ENCODE measurements at regions of chr2 and their contacts with region 1.

Region 1: DNA sequence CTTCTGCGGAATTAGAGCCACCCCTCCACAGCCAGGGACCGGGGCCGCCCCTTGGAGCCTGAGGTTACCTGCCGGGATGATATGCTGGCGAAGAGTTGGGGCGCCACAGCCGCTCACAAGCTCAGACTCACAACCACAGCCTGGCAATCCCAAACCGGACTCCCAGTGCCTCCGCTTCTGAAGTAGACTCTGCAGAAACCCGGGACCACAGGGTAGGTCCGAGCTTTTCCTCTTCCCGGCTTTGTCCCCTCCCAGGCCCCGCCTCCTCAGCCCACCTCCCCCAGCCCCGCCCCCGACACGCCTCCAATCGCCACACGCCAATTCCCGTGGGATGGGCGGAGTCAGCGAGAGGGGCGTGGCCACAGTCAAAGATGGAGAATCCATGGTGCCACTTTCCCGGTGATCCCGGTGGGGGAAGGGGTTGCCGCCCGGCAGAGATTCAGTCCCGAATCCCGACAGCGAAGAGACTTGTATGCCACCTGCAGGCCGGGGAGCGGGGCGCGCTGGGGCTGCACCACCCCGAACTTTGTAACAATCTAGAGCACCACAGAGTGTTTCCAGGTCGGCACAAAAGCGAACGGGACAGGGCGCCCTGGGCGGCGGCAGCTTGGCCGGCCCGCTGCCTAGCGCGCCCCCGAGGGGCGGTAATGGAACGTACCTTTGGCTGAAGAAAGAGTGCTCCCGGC is at the start of gene IDH1:
- DNase-seq: peak; percentile 99
- ATAC-seq: peak; percentile 79
- H3K4me3 Mint-ChIP-seq: peak within 1 kb of the TSS; percentile 100
- H3K27ac Mint-ChIP-seq: peak within 1 kb of the TSS; percentile 88
- H3K4me1 Mint-ChIP-seq: peaks cover 48% of the 10 kb centered on the region
- H3K27me3 Mint-ChIP-seq: no peaks in the 10 kb centered on the region
- CTCF ChIP-seq: no peak
- total RNA-seq, gene IDH1: 36.9 and 46.6 TPM in 2 replicates

Region 2: GRCh38 chr2:206693399-206694137 is 1561.4 kb before region 1 on chr2:
- CTCF ChIA-PET with region 1: no interaction called
- POLR2A ChIA-PET with region 1: no interaction called
- intact Hi-C with region 1: loop called (anchors 1 kb)
- DNase-seq: no peak
- ATAC-seq: peak; percentile 31
- H3K4me3 Mint-ChIP-seq: no peak overlapping the region
- H3K27ac Mint-ChIP-seq: no peak overlapping the region
- H3K4me1 Mint-ChIP-seq: no peaks in the 10 kb centered on the region
- H3K27me3 Mint-ChIP-seq: peaks cover 12% of the 10 kb centered on the region
- CTCF ChIP-seq: no peak

Region 3: GRCh38 chr2:207746131-207746530 is 508.9 kb before region 1 on chr2:
- CTCF ChIA-PET with region 1: interaction called, 7 read pairs
- POLR2A ChIA-PET with region 1: no interaction called
- intact Hi-C with region 1: loop called (anchors 2 kb)
- DNase-seq: peak; percentile 22
- ATAC-seq: peak; percentile 95
- H3K4me3 Mint-ChIP-seq: no peak overlapping the region
- H3K27ac Mint-ChIP-seq: no peak overlapping the region
- H3K4me1 Mint-ChIP-seq: no peaks in the 10 kb centered on the region
- H3K27me3 Mint-ChIP-seq: no peaks in the 10 kb centered on the region
- CTCF ChIP-seq: peak; percentile 46

Region 4: DNA sequence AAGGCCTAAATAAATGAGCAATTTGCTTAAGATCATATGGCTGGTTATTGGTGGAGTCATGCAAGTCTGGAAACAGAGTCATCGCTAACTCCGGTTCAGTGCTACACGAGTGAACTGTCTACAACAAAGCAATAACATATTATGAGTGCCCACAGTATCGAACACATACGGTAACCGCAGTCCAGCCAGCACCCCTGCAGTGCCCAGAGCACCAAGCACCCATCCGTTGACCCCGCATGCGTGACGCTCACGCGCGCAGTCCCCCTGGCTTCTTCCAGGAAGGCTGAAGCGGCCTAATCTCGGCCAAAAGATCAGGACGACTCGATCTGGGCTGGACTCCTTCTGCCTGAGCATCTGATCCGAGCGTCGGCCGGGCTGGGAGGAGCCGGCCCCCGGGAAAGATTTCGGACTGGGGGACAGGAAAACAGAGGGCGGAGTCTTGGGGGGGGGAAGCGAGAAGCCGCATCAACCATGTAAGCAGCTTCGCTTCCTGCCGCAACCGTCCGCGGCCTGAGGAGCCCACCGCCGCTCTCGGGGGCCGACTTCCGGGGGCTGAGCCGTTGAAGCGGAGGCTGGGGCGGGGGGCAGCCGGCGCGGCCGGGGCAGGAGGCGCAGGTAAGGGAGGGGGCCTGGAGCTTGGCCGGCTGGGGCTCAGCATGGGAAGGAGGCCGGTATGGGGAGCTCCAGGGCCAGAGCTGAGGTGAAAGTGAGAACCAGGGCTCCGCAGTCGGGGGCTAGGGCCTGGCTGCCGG is 11.0 kb after region 1 on chr2 and contains the start of gene PIKFYVE:
- CTCF ChIA-PET with region 1: interaction called, 86 read pairs
- POLR2A ChIA-PET with region 1: interaction called, 74 read pairs
- intact Hi-C with region 1: loop called (anchors 1 kb)
- DNase-seq: peak; percentile 85
- ATAC-seq: peak; percentile 87
- H3K4me3 Mint-ChIP-seq: peak within 1 kb of the TSS; percentile 95
- H3K27ac Mint-ChIP-seq: peak within 1 kb of the TSS; percentile 95
- H3K4me1 Mint-ChIP-seq: peaks cover 56% of the 10 kb centered on the region
- H3K27me3 Mint-ChIP-seq: no peaks in the 10 kb centered on the region
- CTCF ChIP-seq: no peak
- total RNA-seq, gene PIKFYVE: 92.2 and 106 TPM in 2 replicates

Region 5: GRCh38 chr2:208320686-208321085 is 65.7 kb after region 1 on chr2:
- CTCF ChIA-PET with region 1: interaction called, 20 read pairs
- POLR2A ChIA-PET with region 1: interaction called, 11 read pairs
- intact Hi-C with region 1: loop called (anchors 1 kb)
- DNase-seq: no peak
- ATAC-seq: peak; percentile 82
- H3K4me3 Mint-ChIP-seq: peak overlapping the region; percentile 62
- H3K27ac Mint-ChIP-seq: peak overlapping the region; percentile 74
- H3K4me1 Mint-ChIP-seq: peaks cover 70% of the 10 kb centered on the region
- H3K27me3 Mint-ChIP-seq: no peaks in the 10 kb centered on the region
- CTCF ChIP-seq: no peak

Region 6: DNA sequence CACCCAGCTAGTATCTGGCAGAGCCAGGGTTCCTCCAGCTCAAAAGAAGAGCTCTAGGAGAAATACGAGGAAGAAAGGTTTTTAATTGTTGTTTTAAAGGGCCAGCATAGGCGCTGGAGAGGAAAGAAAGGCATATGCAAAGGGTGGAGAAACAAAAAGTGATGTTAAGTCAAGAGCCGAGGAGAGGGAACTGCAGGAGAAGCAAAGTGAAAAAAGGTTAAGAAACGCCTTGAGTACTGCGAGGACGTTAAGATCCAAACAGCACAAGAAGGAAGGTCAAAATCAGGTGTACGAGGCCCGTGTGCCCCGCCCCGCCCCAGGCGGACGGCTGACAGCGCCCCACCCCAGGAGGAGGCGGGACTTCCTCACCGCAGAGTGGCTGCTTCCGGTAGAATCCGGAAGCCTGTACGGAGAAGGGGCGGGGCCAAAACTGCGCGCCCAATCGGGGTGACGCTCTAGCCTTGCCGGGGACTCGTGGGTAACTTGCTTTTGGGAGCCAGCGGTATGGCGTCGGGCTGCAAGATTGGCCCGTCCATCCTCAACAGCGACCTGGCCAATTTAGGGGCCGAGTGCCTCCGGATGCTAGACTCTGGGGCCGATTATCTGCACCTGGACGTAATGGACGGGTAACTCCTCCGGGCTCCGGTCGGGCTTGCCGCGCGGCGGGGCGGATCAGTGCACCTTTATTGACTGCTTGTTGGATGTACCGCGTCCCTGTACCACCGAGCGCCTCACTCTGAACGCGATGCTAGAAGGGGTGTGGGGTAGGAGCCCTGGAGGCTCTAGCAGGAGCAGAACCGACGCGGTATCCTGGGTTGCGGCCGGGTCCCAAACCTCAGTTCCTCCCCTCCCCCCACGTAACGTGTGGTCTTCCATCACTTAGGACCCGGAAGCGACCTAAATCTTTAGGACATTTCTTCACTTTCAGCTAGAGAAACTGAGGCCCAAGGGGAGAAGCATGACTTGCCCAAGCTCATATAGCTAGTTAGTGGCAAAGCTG is 1747.4 kb after region 1 on chr2 and contains the start of gene RPE:
- CTCF ChIA-PET with region 1: no interaction called
- POLR2A ChIA-PET with region 1: no interaction called
- intact Hi-C with region 1: loop called (anchors 5 kb)
- DNase-seq: peak; percentile 96
- ATAC-seq: peak; percentile 99
- H3K4me3 Mint-ChIP-seq: peak within 1 kb of the TSS; percentile 96
- H3K27ac Mint-ChIP-seq: peak within 1 kb of the TSS; percentile 89
- H3K4me1 Mint-ChIP-seq: peaks cover 55% of the 10 kb centered on the region
- H3K27me3 Mint-ChIP-seq: peaks cover 3% of the 10 kb centered on the region
- CTCF ChIP-seq: no peak
- total RNA-seq, gene RPE: 43.3 and 54.7 TPM in 2 replicates

Measured in activated B cell treated with CpG ODN at 0.5 μM for 24 hours (primary cell).